Activated B cell treated with CpG ODN at 0.5 μM for 24 hours (primary cell): ENCODE measurements at regions of chr9 and their contacts with region 1.

Region 1: GRCh38 chr9:114339130-114339908 is 9.7 kb downstream of the ORM2 start:
- DNase-seq: peak; percentile 68
- ATAC-seq: peak; percentile 79
- H3K4me3 Mint-ChIP-seq: peak overlapping the region; percentile 6
- H3K27ac Mint-ChIP-seq: peak overlapping the region; percentile 74
- H3K4me1 Mint-ChIP-seq: peaks cover 32% of the 10 kb centered on the region
- H3K27me3 Mint-ChIP-seq: no peaks in the 10 kb centered on the region
- CTCF ChIP-seq: peak; percentile 87

Region 2: DNA sequence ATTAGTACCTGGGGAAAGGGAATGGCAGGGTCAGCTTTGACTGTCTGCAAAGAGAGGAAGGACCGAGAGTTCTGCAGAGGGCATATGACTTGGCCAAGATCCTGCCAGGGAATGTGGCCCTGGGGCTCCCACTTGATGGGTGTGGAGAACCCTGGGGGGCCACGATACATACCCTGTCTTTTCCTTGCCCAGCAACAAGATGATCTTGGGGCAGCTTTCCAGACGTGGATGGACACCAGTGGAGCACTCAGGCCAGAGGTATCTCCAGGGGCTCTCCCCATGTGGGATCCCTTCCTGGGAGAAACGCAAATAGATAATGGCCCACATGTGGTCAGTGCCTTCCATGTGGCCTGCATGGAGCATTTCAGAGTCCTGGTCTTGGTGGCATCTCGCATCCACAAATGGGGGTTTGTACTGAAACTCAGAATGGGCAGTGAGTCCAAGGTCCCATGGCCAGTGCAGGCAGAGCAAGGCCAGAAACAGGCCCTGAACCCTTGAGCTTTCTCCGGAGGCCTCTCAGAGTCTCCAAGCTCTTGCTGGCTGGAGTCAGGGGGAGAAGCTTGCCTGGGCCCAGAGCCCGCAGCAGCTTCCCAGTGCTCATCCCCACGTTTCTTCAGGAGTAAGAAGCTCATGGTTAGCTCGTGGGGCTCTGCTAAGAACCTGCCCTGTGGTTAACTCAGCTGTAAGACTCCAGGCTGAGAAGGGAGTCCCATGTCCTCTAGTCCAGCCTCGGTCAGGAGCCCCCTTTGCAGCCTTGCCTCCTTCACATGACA is 34.7 kb before region 1 on chr9:
- CTCF ChIA-PET with region 1: no interaction called
- POLR2A ChIA-PET with region 1: no interaction called
- intact Hi-C with region 1: no loop called
- DNase-seq: peak; percentile 12
- ATAC-seq: no peak
- H3K4me3 Mint-ChIP-seq: no peak overlapping the region
- H3K27ac Mint-ChIP-seq: no peak overlapping the region
- H3K4me1 Mint-ChIP-seq: peaks cover 6% of the 10 kb centered on the region
- H3K27me3 Mint-ChIP-seq: no peaks in the 10 kb centered on the region
- CTCF ChIP-seq: no peak

Region 3: DNA sequence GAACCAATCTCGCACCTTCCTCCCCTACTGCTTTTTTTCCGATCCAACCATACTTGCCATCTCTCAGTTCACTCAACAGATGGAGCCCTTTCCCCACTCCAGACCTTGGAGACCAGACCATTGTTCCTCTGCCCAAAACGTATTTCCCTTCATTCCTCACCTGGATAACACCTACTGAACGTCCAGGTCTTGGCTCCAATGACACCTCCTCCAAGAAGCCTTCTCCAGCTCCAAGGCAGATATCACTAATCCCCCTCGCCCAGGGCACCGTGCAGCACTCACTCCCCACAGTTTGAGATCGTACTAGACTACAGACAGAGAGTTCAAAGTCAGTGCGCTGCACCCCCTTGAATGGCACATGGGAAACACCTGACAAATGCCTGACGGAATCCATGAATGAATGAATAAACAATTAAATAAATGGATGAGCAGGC is 95.6 kb after region 1 on chr9:
- CTCF ChIA-PET with region 1: no interaction called
- POLR2A ChIA-PET with region 1: no interaction called
- intact Hi-C with region 1: loop called (anchors 1 kb)
- DNase-seq: no peak
- ATAC-seq: peak; percentile 81
- H3K4me3 Mint-ChIP-seq: no peak overlapping the region
- H3K27ac Mint-ChIP-seq: no peak overlapping the region
- H3K4me1 Mint-ChIP-seq: no peaks in the 10 kb centered on the region
- H3K27me3 Mint-ChIP-seq: no peaks in the 10 kb centered on the region
- CTCF ChIP-seq: no peak

Region 4: DNA sequence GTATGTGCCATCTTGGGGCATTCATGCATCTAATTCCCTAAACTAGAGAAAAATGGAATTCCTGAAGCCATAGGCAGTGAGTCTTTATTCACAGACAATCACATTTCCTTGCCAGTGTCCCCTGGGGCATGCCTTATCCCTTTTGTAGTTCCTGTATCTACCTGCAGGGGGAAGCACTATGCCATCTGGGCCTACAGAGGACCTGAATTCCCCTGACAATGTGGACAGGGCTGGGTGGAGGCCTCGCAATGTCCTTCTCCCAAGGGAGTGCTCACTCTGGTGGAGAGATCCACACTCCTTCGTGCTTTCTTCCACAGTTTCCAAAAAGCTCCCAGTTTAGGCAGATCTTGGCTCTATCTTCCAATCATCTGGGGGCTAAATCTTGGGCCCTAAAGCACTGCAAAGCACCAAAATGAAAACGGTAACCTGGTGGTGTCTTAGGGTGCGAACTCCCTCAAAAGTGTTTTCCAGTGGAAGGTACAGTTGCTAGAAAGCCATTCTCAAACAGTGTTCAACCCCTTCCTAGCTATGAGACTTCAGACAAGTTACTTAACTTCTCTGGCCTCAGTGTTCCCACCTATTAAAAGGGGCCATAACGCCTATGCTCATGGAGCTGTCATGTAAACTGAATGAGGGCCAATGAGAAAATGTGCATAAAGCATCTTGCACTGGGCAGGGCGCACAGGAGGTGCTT is 148.4 kb after region 1 on chr9:
- CTCF ChIA-PET with region 1: no interaction called
- POLR2A ChIA-PET with region 1: no interaction called
- intact Hi-C with region 1: loop called (anchors 5 kb)
- DNase-seq: no peak
- ATAC-seq: peak; percentile 85
- H3K4me3 Mint-ChIP-seq: no peak overlapping the region
- H3K27ac Mint-ChIP-seq: no peak overlapping the region
- H3K4me1 Mint-ChIP-seq: peaks cover 39% of the 10 kb centered on the region
- H3K27me3 Mint-ChIP-seq: no peaks in the 10 kb centered on the region
- CTCF ChIP-seq: peak; percentile 41